Activated T-helper 2 cell treated with anti-CD3 and anti-CD28 coated beads, Interferon-gamma antibody, Interleukin-2, Interleukin-4, amounts not matched to agents 10 μg/mL and 5 μg/mL and 100 μg/mL, durations not matched to agents 14 hours and 24 hours and 36 hours (primary cell): ENCODE measurements at regions of chr1 and their contacts with region 1.

Region 1: GRCh38 chr1:51433269-51433971 is 85.6 kb downstream of the EPS15 start:
- DNase-seq: no peak
- H3K4me3 Mint-ChIP-seq: no peak overlapping the region
- H3K27ac Mint-ChIP-seq: peak overlapping the region; percentile 6
- H3K4me1 Mint-ChIP-seq: peaks cover 21% of the 10 kb centered on the region
- H3K27me3 Mint-ChIP-seq: no peaks in the 10 kb centered on the region

Region 2: DNA sequence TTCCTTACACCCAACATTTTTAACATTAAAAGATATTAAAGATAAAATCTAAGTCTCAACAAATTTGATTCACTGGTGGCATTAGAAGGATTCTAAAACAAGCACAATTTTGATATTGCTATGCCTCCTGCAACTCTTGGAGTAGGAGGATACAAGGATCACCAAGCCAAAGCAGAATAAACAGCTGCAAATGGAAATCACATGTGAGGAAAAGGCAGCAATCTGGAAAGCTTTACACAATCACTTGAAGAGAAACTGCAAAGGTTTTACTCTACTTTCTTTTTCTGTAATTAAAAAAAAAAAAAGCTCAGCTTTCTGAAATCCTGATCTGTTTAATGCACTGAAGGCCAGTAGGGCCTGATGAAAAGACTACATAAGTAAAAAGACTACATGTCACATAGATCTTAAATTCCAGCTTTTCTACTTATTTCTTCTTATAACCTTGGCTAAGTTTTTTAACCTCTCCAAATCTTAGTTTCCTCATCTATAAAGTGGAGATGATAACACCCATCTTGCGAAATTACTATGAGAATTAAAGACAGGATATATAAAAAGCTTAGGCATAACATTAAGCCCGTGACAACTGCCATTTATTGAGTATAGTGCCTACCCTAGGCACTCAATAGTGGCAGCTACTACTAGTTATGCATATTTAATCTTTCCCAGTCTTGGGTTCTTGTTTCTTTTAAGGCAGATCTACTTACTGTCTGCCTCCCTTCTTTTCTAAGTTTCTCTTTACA is 12.1 kb after region 1 on chr1:
- intact Hi-C with region 1: loop called (anchors 1 kb)
- DNase-seq: no peak
- H3K4me3 Mint-ChIP-seq: no peak overlapping the region
- H3K27ac Mint-ChIP-seq: no peak overlapping the region
- H3K4me1 Mint-ChIP-seq: peaks cover 53% of the 10 kb centered on the region
- H3K27me3 Mint-ChIP-seq: no peaks in the 10 kb centered on the region